ENCODE measurements at regions of chr19 and their contacts with region 1.

Region 1: DNA sequence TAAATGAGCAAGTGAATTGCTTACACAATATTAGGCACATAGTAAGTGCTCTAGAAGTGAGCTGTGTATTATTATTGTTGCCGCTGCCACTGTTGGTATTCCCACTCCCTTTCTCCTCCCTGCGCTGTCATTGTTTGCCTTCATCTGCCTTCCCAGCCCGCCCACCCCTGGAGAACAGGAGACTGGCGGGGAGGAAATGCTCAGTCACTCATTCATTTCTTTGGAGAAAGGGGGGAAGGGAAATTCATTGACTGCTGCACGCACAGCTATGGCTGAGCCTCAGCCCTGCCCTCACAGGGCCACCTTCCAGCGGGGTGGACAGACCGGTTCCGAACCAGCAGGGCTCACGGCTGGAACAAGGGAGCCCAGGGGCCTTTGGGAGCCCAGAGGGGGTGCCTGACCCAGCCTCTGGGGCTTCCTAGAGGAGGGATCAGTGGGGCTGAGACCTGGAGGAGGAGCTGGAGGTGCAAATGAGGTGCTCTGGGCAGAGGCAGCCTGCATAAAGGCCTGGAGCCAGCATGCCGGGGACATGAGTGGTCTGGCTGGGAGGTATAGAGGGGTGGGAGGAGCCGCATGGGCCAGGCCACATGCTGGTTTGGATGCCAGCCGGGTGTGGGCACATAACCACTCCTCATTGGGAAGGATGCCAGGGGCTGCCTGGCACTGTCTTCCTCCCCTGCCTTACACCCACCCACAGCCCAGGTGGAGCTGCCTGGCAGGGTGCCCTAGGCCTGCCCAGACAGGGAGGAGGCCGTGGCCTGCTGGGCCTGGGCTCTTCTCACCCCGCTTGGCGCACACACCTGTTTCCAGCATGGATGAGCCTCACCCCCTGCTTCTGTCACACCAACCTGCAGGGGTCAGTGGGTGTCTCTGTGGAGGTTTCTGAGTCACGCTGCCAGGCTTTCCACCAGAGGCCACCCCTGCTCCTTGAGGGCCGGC is 26.8 kb downstream of the PPP5C start:
- DNase-seq: peak; percentile 61
- ATAC-seq: peak; percentile 86
- H3K4me3 Mint-ChIP-seq: peak overlapping the region; percentile 40
- H3K27ac Mint-ChIP-seq: peak overlapping the region; percentile 97
- H3K4me1 Mint-ChIP-seq: peaks cover 39% of the 10 kb centered on the region
- H3K27me3 Mint-ChIP-seq: no peaks in the 10 kb centered on the region
- CTCF ChIP-seq: no peak

Region 2: GRCh38 chr19:46346821-46347571 is 26.7 kb before region 1 on chr19 and contains the start of gene PPP5C:
- CTCF ChIA-PET with region 1: interaction called, 35 read pairs
- POLR2A ChIA-PET with region 1: no interaction called
- DNase-seq: peak; percentile 92
- ATAC-seq: peak; percentile 84
- H3K4me3 Mint-ChIP-seq: peak within 1 kb of the TSS; percentile 92
- H3K27ac Mint-ChIP-seq: peak within 1 kb of the TSS; percentile 94
- H3K4me1 Mint-ChIP-seq: peaks cover 52% of the 10 kb centered on the region
- H3K27me3 Mint-ChIP-seq: no peaks in the 10 kb centered on the region
- CTCF ChIP-seq: peak; percentile 60; the same call in 1 of the 2 replicates
- total RNA-seq, gene PPP5C: 98.9 to 107 TPM (median 103 TPM) in 3 replicates

Region 3: DNA sequence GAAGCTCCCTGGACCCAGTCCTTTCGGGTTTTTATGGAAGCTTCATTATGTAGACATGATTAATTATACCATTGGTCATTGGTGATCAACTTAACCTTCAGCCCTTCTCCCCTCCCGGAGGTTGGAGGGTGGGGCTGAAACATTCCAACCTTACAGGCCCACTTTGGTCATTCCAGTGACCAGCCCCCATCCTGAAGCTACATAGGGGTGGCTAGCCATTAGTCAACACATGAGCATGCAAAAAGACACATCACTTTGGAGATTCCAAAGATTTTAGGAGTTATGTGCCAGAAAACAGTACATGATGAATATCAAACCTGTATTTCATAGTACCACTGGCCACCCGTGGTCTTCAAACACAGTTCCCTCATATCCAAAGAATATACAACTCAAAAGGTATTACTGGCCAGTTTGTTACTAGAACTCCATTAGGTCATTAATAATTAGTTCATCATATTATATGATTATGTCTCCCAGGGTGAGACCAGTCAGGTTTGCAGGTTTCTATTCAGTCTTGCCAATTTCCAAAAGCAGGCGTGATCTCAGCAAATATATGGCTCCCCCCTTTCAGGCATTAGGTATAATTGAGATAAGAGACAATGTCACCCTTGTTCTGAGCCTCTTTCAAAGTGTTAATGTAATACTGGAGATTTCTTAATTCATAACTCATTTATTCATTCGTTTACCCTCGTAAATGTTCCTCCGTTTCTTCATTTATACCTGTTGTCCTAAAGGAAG is 15.7 kb before region 1 on chr19:
- CTCF ChIA-PET with region 1: interaction called, 15 read pairs
- POLR2A ChIA-PET with region 1: no interaction called
- DNase-seq: no peak
- ATAC-seq: no peak
- H3K4me3 Mint-ChIP-seq: no peak overlapping the region
- H3K27ac Mint-ChIP-seq: no peak overlapping the region; the same call in 1 of the 2 replicates
- H3K4me1 Mint-ChIP-seq: no peaks in the 10 kb centered on the region
- H3K27me3 Mint-ChIP-seq: no peaks in the 10 kb centered on the region
- CTCF ChIP-seq: no peak

Region 4: GRCh38 chr19:46451352-46451751 is 77.7 kb after region 1 on chr19:
- CTCF ChIA-PET with region 1: no interaction called
- POLR2A ChIA-PET with region 1: no interaction called
- DNase-seq: no peak
- ATAC-seq: no peak
- H3K4me3 Mint-ChIP-seq: no peak overlapping the region
- H3K27ac Mint-ChIP-seq: no peak overlapping the region
- H3K4me1 Mint-ChIP-seq: no peaks in the 10 kb centered on the region
- H3K27me3 Mint-ChIP-seq: peaks cover 7% of the 10 kb centered on the region
- CTCF ChIP-seq: no peak